ENCODE measurements at regions of chr3 and their contacts with region 1.

Region 1: GRCh38 chr3:94069194-94069813 is 6.4 kb downstream of the NSUN3 start:
- DNase-seq: peak; percentile 39
- ATAC-seq: no peak; the same call in none of the 2 replicates
- H3K4me3 ChIP-seq: no peak overlapping the region
- H3K27ac ChIP-seq: no peak overlapping the region; the same call in 1 of the 2 replicates
- H3K4me1 ChIP-seq: no peaks in the 10 kb centered on the region; the same call in 1 of the 2 replicates
- H3K27me3 ChIP-seq: no peaks in the 10 kb centered on the region
- CTCF ChIP-seq: peak; percentile 58
- POLR2A ChIP-seq: no peak
- RAD21 ChIP-seq: peak; percentile 49

Region 2: DNA sequence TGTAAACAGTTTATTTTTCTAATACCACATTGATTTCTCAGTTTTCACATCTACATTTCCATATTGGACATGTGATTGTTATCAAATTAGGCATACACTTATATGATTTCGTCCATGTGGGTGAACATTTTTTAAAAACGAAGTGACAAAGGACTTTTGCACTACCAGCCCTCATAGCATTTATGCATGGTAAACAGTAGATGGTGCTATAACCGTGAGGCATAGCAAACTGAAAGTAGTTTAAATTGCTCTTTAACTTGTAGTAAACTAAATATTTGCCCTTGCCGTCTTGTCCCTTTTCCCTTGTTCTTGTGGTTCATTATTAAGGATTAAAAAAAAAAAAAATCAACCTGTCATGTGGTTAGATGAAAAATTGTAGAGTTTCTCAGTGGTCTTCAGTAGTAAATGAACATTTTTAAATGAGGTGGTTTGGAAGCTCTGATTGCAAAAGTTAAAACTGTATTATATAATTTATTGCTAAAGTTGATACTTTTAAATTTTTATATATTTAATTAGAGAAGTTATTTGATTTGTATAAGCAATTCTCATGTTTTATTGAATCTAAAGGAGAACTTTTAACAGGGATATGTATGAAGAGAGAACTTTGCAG is 64.9 kb before region 1 on chr3:
- CTCF ChIA-PET with region 1: interaction called, 7 read pairs
- POLR2A ChIA-PET with region 1: no interaction called
- dilution Hi-C with region 1: no loop called
- in situ Hi-C with region 1: loop called (anchors 5 kb)
- intact Hi-C with region 1: loop called (anchors 1 kb)
- DNase-seq: peak; percentile 82
- ATAC-seq: peak; percentile 90
- H3K4me3 ChIP-seq: no peak overlapping the region
- H3K27ac ChIP-seq: no peak overlapping the region
- H3K4me1 ChIP-seq: peaks cover 4% of the 10 kb centered on the region; the same call in 1 of the 2 replicates
- H3K27me3 ChIP-seq: no peaks in the 10 kb centered on the region
- CTCF ChIP-seq: peak; percentile 85
- POLR2A ChIP-seq: no peak
- RAD21 ChIP-seq: peak; percentile 81

Region 3: DNA sequence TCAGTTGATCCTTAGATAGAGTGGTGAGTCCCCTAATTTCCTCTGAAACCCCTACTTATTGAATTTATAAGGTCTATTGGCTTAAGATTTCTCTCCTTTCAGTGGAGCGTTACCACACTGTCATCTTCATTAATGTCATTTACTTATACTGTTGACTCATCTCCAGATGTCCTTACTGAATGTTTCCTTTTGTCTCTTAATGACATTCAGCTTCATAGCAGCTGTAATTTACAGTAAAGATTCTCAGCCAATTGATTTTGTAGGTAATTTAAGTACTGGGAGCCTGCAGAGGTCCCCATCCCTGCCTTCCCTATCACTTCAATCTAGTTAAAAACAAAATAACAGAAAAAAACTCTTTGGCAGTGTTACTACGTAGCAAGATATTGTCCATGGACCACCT is 59.7 kb before region 1 on chr3:
- CTCF ChIA-PET with region 1: interaction called, 7 read pairs
- POLR2A ChIA-PET with region 1: no interaction called
- dilution Hi-C with region 1: no loop called
- in situ Hi-C with region 1: loop called (anchors 5 kb)
- intact Hi-C with region 1: loop called (anchors 1 kb)
- DNase-seq: no peak
- ATAC-seq: no peak
- H3K4me3 ChIP-seq: no peak overlapping the region
- H3K27ac ChIP-seq: no peak overlapping the region
- H3K4me1 ChIP-seq: peaks cover 4% of the 10 kb centered on the region; the same call in 1 of the 2 replicates
- H3K27me3 ChIP-seq: no peaks in the 10 kb centered on the region
- CTCF ChIP-seq: no peak
- POLR2A ChIP-seq: no peak
- RAD21 ChIP-seq: no peak

Region 4: DNA sequence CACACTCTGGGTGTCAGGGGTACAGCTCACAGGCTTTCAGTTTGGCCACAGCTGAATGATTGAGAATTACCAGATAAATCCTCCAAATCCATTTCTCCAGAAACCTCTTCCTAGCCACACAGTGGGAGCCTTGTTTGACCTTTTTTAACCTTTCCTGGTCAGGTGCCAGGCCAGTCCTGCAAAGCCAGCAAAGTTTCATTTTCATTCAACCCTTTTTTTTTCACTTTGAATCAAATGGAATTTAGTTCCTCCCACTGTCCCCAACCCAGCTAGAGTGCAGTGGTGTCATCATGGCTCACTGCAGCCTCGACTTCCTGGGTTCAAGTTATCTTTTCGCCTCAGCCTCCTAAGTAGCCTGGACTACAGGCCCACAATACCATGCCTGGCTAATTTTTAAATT is 61.4 kb after region 1 on chr3:
- CTCF ChIA-PET with region 1: no interaction called
- POLR2A ChIA-PET with region 1: no interaction called
- dilution Hi-C with region 1: no loop called
- in situ Hi-C with region 1: no loop called
- intact Hi-C with region 1: no loop called
- DNase-seq: no peak
- ATAC-seq: no peak
- H3K4me3 ChIP-seq: no peak overlapping the region
- H3K27ac ChIP-seq: no peak overlapping the region
- H3K4me1 ChIP-seq: no peaks in the 10 kb centered on the region
- H3K27me3 ChIP-seq: no peaks in the 10 kb centered on the region
- CTCF ChIP-seq: no peak
- POLR2A ChIP-seq: no peak
- RAD21 ChIP-seq: no peak

Measured in IMR-90 (cell line).